ENCODE measurements at regions of chr16 and their contacts with region 1.

Region 1: GRCh38 chr16:56519459-56520250 is at the start of gene BBS2:
- DNase-seq: peak; percentile 90 to 94
- ATAC-seq: peak; percentile 96 to 99 (median 98)
- H3K4me3 ChIP-seq: peak within 1 kb of the TSS; percentile 71 to 99 (median 92)
- H3K27ac ChIP-seq: peak within 1 kb of the TSS; percentile 35 to 94 (median 90)
- H3K4me1 ChIP-seq: peaks cover 0 to 56% (median 38%) of the 10 kb centered on the region in 9 donors
- H3K27me3 ChIP-seq: no peaks in the 10 kb centered on the region
- CTCF ChIP-seq: peak in 1 of 9 donors; percentile 14
- total RNA-seq, gene BBS2: 37.7 to 75.9 (median 60.1) TPM

Region 2: GRCh38 chr16:55021595-55022475 is 1497.8 kb before region 1 on chr16:
- intact Hi-C with region 1: no loop called
- DNase-seq: no peak
- ATAC-seq: no peak
- H3K4me3 ChIP-seq: no peak overlapping the region
- H3K27ac ChIP-seq: no peak overlapping the region
- H3K4me1 ChIP-seq: no peaks in the 10 kb centered on the region
- H3K27me3 ChIP-seq: peaks cover 0 to 13% (median 2%) of the 10 kb centered on the region in 7 donors
- CTCF ChIP-seq: peak in 2 of 9 donors; percentile 9 to 33

Region 3: GRCh38 chr16:56589141-56590039 is 69.7 kb after region 1 on chr16 and contains the start of gene MT3:
- intact Hi-C with region 1: loop called in 1 of 10 experiments (anchors 10 kb)
- DNase-seq: peak in 1 of 2 donors; percentile 17
- ATAC-seq: peak in 6 of 8 donors; percentile 23 to 62 (median 40)
- H3K4me3 ChIP-seq: peak within 1 kb of the TSS; percentile 7 to 53 (median 46)
- H3K27ac ChIP-seq: no peak within 1 kb of the TSS
- H3K4me1 ChIP-seq: peaks cover 3 to 11% (median 8%) of the 10 kb centered on the region in 9 donors
- H3K27me3 ChIP-seq: peaks cover 11 to 46% (median 34%) of the 10 kb centered on the region in 7 donors
- CTCF ChIP-seq: no peak
- total RNA-seq, gene MT3: 1.9 to 11.6 (median 4.1) TPM